Right ventricle myocardium inferior (tissue), 1 donor: ENCODE measurements at regions of chr19 and their contacts with region 1.

Region 1: GRCh38 chr19:8269724-8270123 is 38.4 kb downstream of the CD320 start:
- DNase-seq: no peak
- ATAC-seq: no peak

Region 2: GRCh38 chr19:8240274-8241229 is 29.2 kb before region 1 on chr19:
- intact Hi-C with region 1: no loop called
- DNase-seq: peak; percentile 90
- ATAC-seq: peak; percentile 77

Region 3: DNA sequence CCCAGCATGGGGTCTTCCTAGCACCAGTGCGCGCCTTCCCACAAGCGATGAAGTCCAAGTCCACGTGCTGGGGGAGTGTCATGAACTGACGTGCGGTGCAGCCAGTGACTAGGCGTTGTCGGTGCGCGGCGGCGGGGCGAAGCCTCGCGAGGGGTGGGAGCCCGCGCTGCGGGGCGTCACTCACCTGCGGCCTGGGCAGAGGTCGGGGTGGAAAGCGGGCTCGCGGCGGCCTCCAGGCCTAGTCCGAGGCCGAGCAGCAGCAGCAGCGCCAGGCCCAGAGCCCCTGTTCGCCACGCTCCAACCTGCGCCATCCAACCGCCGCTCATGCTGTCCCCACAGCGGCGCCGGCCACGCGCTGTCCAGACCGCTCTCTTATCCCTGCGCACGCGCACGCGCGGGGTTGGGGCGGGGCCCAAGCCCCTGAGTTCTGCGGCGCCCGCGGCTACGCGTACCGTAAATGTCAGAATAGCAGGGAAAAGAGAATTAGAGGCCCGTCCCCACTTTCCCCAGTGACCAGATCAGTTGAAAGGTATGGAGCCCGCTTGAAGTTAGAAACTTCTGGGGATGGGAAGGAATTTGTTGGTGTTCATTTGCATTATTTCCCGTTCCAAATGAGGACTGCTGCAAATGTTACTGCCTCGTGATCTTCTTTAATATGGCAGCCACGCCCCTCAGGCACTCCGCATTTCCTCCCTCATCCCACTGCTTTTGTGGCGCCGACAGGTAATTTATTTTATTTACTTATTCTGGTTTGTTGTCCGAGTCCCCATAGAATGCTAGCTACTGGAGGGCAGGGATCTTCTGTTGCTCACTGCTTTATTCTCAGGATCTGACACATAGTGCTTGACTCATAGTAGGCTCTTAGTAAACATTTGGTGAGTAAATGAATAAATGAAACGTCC is 38.5 kb after region 1 on chr19 and contains the start of gene CD320:
- intact Hi-C with region 1: loop called (anchors 5 kb)
- DNase-seq: peak; percentile 96
- ATAC-seq: peak; percentile 97
- total RNA-seq, gene CD320: 32.9 TPM